ENCODE measurements at regions of chr1 and their contacts with region 1.

Region 1: DNA sequence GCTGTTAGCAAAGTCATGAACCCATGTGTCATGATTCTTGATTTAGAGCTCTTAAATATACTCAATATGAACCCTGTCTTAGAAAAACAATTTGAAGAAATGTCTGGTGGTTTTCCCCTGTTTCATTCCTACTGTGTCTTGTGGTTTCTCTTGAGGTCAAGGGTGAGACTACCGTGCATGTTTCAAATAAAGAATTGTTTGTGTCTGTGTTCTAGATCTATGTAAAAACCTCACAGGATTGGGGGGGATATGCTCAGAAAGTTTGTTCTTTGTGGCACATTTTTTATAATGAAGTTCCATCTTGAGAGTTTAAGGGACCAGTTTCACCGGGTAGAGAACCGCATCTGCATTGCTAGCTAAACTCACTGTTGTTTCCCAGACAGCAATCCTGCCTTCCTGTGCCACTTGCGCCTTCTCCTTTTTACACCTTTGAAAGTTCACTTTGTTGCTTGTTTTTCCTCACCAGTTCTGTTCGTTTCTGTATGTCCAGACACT is 30.9 kb upstream of the CACYBP start:
- DNase-seq: peak; percentile 37
- H3K4me3 ChIP-seq: peak overlapping the region; percentile 0
- H3K27ac ChIP-seq: peak overlapping the region; percentile 93
- H3K4me1 ChIP-seq: peaks cover 67% of the 10 kb centered on the region
- CTCF ChIP-seq: no peak

Region 2: GRCh38 chr1:174942547-174943255 is 26.1 kb before region 1 on chr1:
- CTCF ChIA-PET with region 1: no interaction called
- POLR2A ChIA-PET with region 1: interaction called, 13 read pairs
- intact Hi-C with region 1: no loop called
- DNase-seq: peak; percentile 84
- H3K4me3 ChIP-seq: peak overlapping the region; percentile 45
- H3K27ac ChIP-seq: peak overlapping the region; percentile 74
- H3K4me1 ChIP-seq: peaks cover 63% of the 10 kb centered on the region
- CTCF ChIP-seq: no peak

Region 3: GRCh38 chr1:174953285-174954072 is 15.3 kb before region 1 on chr1:
- CTCF ChIA-PET with region 1: interaction called, 4 read pairs
- POLR2A ChIA-PET with region 1: interaction called, 14 read pairs
- intact Hi-C with region 1: loop called (anchors 2 kb)
- DNase-seq: no peak
- H3K4me3 ChIP-seq: peak overlapping the region; percentile 52
- H3K27ac ChIP-seq: peak overlapping the region; percentile 77
- H3K4me1 ChIP-seq: peaks cover 84% of the 10 kb centered on the region
- CTCF ChIP-seq: no peak

Measured in OCI-LY7 (cell line).